Caco-2 (cell line): ENCODE measurements at regions of chr15 and their contacts with region 1.

Region 1: GRCh38 chr15:41139619-41140018 is 23.5 kb upstream of the INO80 start:
- DNase-seq: no peak
- H3K4me3 ChIP-seq: no peak overlapping the region
- H3K4me3 Mint-ChIP-seq: no peak overlapping the region
- H3K27ac Mint-ChIP-seq: no peak overlapping the region
- H3K4me1 ChIP-seq: peaks cover 11% of the 10 kb centered on the region
- H3K4me1 Mint-ChIP-seq: no peaks in the 10 kb centered on the region
- H3K27me3 ChIP-seq: no peaks in the 10 kb centered on the region
- H3K27me3 Mint-ChIP-seq: no peaks in the 10 kb centered on the region
- CTCF ChIP-seq: no peak

Region 2: DNA sequence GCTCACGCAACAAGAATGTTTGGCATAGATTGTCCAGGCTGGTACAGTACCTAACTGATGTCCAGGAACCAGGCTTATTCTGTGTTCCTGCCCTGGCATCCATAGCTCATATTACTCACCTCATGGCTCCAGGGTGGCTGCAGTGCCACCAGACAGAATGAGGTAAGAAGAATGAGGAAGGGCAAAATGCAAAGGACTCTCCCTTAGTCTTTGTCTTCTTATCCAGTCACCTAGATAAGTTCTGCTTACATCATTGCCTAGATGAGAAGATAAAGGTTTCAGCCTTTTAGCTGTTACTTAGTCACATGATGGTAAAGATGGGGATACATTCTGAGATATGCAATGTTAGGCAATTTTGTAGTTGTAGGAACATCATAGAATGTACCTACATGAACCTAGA is 137.2 kb after region 1 on chr15:
- CTCF ChIA-PET with region 1: no interaction called
- POLR2A ChIA-PET with region 1: interaction called, 12 read pairs
- intact Hi-C with region 1: no loop called
- DNase-seq: peak in 1 of 2 experiments; percentile 32
- H3K4me3 ChIP-seq: no peak overlapping the region
- H3K4me3 Mint-ChIP-seq: no peak overlapping the region
- H3K27ac Mint-ChIP-seq: peak overlapping the region; percentile 72
- H3K4me1 ChIP-seq: peaks cover 12% of the 10 kb centered on the region
- H3K4me1 Mint-ChIP-seq: peaks cover 7% of the 10 kb centered on the region
- H3K27me3 ChIP-seq: no peaks in the 10 kb centered on the region
- H3K27me3 Mint-ChIP-seq: no peaks in the 10 kb centered on the region
- CTCF ChIP-seq: no peak